Endothelial cell of umbilical vein (primary cell): ENCODE measurements at regions of chr4 and their contacts with region 1.

Region 1: DNA sequence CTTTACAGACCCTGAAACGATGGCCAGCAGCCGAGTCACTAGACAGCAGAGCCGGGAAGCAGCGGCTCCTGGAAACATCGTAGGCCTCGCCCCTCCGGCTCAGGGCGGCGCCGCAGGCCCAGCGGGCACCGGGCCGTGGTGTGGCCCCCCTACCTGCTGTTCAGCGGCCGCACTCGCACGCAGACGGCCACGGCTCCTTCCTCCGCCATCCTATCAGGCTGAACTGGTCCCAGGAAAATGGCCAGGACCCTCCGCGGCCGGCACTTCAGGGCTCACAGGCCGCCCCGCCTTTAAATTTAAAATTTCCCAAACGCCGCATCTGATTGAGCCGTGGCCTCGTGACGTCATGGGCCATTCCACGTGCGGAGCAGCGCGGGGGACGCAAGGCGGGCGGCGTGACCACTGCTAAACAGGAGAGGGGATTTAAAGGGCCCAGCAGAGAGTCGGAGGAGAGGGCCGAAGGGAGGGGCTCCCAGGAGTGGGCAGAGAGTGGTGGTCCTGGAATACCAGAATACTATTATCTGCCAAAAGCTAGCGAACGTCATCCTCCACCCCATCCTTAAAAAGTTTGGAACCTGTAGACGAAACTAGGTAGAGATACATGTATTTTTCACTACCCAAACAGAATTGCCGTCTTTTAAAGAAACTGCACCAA is at the start of gene CENPE:
- DNase-seq: peak; percentile 94
- H3K4me3 ChIP-seq: peak within 1 kb of the TSS; percentile 74 to 93 (median 92)
- H3K27ac ChIP-seq: peak within 1 kb of the TSS; percentile 41
- H3K4me1 ChIP-seq: peaks cover 11% of the 10 kb centered on the region
- H3K27me3 ChIP-seq: peaks cover 0 to 2% of the 10 kb centered on the region in 2 experiments
- CTCF ChIP-seq: no peak
- POLR2A ChIP-seq: peak; percentile 52
- total RNA-seq, gene CENPE: 45.7 and 50.8 TPM in 2 replicates

Region 2: GRCh38 chr4:103171006-103171405 is 27.2 kb before region 1 on chr4:
- CTCF ChIA-PET with region 1: no interaction called
- POLR2A ChIA-PET with region 1: no interaction called
- dilution Hi-C with region 1: no loop called
- intact Hi-C with region 1: loop called (anchors 1 kb)
- DNase-seq: no peak
- H3K4me3 ChIP-seq: no peak overlapping the region
- H3K27ac ChIP-seq: no peak overlapping the region
- H3K4me1 ChIP-seq: peaks cover 6% of the 10 kb centered on the region
- H3K27me3 ChIP-seq: no peaks in the 10 kb centered on the region
- CTCF ChIP-seq: no peak
- POLR2A ChIP-seq: no peak

Region 3: GRCh38 chr4:105122350-105122749 is 1924.1 kb after region 1 on chr4:
- CTCF ChIA-PET with region 1: no interaction called
- POLR2A ChIA-PET with region 1: no interaction called
- dilution Hi-C with region 1: no loop called
- intact Hi-C with region 1: loop called (anchors 5 kb)
- DNase-seq: peak; percentile 13
- H3K4me3 ChIP-seq: no peak overlapping the region
- H3K27ac ChIP-seq: no peak overlapping the region
- H3K4me1 ChIP-seq: no peaks in the 10 kb centered on the region
- H3K27me3 ChIP-seq: peaks cover 0 to 2% of the 10 kb centered on the region in 2 experiments
- CTCF ChIP-seq: no peak
- POLR2A ChIP-seq: no peak